ENCODE measurements at regions of chr2 and their contacts with region 1.

Region 1: DNA sequence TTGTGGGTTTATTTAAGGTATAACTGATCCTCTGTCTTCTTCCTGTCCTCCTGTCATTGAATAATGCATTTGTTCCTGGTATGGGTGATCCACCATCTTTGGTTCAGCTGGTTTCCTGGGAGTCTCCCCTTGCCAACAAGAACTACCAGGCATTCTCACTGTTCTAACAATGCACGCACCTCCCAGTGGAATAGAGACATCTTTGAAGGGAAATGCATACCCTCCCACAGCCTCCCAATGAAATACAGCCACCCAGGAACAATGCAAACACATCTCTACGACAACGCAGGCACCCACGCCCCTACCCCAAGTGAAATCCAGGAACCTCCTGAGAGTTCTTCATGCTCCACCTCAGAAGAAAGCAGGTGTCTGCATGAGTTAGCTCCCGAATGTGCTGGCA is 318.0 kb downstream of the SOX11 start:
- DNase-seq: no peak
- H3K4me3 ChIP-seq: no peak overlapping the region
- H3K27ac ChIP-seq: no peak overlapping the region
- H3K4me1 ChIP-seq: peaks cover 7% of the 10 kb centered on the region
- H3K27me3 ChIP-seq: no peaks in the 10 kb centered on the region
- CTCF ChIP-seq: no peak

Region 2: DNA sequence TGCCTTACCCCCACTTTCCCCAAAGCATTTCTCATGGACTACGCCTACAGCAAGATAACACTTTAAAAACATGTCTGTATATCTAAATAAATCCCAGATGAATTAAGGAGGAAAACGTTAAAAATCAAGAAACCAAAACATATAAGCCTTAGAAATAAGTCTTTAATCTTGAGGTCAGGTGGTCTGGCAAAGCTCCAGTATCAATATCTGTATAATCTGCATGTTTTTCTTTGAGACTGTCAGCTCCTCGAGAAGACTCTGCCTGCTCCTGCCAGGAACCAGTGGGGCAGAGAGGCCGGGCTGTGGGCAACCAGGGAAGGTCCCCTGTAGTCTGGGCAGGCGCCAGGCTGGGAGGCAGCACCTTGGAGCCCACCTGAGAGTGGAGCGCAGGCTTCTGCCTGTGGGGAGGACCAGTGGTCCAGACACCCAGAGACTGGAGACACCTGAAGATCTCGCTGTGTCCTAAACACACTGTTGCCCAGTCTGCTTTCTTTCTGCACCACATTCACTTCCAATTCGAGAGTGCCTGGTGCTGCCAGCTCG is 609.0 kb before region 1 on chr2:
- CTCF ChIA-PET with region 1: no interaction called
- POLR2A ChIA-PET with region 1: no interaction called
- intact Hi-C with region 1: no loop called
- DNase-seq: no peak
- H3K4me3 ChIP-seq: no peak overlapping the region
- H3K27ac ChIP-seq: no peak overlapping the region
- H3K4me1 ChIP-seq: no peaks in the 10 kb centered on the region
- H3K27me3 ChIP-seq: no peaks in the 10 kb centered on the region
- CTCF ChIP-seq: no peak

Region 3: DNA sequence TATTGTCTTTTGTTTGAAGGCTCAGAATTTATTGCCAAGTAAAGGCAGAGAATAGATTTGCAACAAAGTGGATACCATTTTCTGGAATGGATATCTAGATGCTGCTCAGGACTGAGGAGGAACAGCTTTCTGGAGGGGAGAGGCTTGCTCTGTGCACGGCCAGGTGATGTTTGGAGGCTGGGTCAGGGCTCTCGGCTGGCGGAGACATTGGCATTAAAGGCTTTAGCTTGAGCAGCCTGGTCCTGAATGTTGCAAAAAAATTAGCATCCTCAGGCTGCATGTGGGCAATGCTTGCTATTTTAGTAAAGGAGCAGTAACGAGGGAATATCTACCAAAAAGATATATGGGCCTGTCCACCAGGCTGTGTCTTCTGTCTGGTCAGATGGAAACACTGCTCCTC is 927.4 kb after region 1 on chr2:
- CTCF ChIA-PET with region 1: no interaction called
- POLR2A ChIA-PET with region 1: interaction called, 16 read pairs
- intact Hi-C with region 1: no loop called
- DNase-seq: no peak
- H3K4me3 ChIP-seq: no peak overlapping the region
- H3K27ac ChIP-seq: no peak overlapping the region
- H3K4me1 ChIP-seq: no peaks in the 10 kb centered on the region
- H3K27me3 ChIP-seq: no peaks in the 10 kb centered on the region
- CTCF ChIP-seq: no peak

Measured in A673 (cell line).